Left lung (tissue), 14 donors: ENCODE measurements at regions of chr1 and their contacts with region 1.

Region 1: GRCh38 chr1:54406339-54407153 is at the start of gene SSBP3:
- DNase-seq: peak; percentile 89 to 99 (median 94)
- ATAC-seq: peak; percentile 90
- H3K4me3 ChIP-seq: peak within 1 kb of the TSS; percentile 73 to 84
- H3K27ac ChIP-seq: peak within 1 kb of the TSS; percentile 82 to 85
- H3K4me1 ChIP-seq: peaks cover 18 to 60% of the 10 kb centered on the region in 2 donors
- H3K27me3 ChIP-seq: peaks cover 0 to 8% of the 10 kb centered on the region in 2 donors
- CTCF ChIP-seq: no peak
- polyA plus RNA-seq, gene SSBP3: 99.5 to 129 (median 119) TPM

Region 2: DNA sequence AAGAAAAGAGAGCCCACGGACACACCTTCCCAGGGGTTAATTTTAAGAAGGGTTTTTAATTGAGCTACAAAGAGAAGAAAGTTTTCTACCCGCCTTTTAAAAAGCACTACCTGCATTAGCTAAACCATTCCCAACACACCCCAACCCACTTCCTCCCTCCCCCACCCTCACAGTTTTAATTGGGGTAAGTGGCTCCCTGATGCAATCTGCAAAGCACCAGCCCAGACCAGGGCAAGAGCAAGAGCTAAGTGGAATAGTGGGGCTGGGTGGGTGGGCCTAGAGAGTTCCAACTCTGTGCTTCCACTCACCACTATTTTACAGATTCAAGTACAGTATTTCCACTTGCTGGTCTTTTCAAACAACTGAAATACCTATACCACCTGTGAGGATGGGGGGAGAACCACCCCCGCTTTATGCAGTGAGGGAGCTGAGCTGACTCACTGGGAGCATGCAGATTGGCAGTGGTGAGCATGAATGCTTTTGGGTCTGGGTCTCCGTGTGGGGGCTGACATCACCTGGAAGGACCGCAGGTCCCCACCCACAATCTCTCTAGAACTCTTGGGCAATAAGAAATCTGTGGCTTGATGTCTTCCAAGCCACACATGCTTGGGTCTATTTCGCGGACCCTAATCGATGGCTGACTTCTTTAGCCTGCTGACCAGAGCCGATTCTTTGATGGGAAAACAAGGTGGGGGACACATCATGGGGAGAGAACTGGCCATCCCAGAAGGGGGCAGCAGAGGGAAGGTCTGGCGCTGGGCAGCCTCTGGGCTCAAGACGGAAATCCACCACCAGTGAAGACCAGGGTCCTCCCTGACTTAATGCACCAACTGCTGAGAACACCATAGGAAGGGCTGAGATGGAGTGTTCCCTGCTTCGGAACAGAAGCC is 95.9 kb before region 1 on chr1:
- intact Hi-C with region 1: loop called in 1 of 2 experiments (anchors 10 kb)
- DNase-seq: no peak
- ATAC-seq: peak; percentile 51
- H3K4me3 ChIP-seq: no peak overlapping the region
- H3K27ac ChIP-seq: no peak overlapping the region
- H3K4me1 ChIP-seq: peaks cover 6 to 38% of the 10 kb centered on the region in 2 donors
- H3K27me3 ChIP-seq: no peaks in the 10 kb centered on the region
- CTCF ChIP-seq: peak; percentile 42 to 50

Region 3: DNA sequence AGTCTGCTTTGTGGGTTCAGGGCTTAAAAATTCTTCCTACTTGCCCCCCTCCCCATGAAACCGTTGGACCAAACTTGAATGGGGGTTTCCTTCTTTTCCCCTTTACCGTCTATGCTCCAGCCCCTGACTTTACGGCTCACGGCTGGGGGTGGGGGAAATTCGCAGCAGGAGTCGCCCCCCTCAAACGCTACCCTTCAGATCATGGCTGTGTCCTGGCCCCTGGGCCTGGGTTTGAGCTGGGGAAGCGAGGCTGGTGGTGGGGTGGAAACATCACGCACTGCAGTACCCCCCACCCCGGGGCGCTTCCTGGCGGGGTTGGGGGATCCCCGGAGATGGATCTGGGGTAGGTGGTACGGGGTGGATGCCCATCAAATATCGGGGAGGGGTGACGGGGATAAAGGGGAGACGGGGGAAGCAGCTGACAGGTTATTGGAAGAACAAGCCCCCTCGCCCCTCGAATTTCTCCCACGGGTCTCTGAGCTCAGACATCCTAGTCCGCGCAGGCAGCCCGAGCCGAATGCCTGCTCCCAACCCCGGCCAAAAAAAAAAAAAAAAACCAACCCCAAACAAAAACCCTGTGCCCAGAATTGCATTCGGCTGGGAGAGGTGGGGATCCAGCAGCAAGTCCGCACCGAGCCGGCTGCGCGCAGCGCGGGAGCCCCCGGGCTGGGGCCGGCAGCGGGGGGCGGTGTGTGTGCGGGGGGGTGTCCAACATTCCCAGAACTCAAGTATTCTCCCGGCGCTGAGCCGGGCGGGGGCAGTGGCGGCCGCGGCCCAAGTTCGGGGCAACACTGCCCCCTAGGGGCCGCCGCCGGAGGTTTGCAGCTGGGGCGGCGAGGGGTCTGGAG is 82.5 kb after region 1 on chr1:
- intact Hi-C with region 1: loop called in 1 of 2 experiments (anchors 5 kb)
- DNase-seq: peak; percentile 78 to 95 (median 92)
- ATAC-seq: peak; percentile 86
- H3K4me3 ChIP-seq: peak overlapping the region; percentile 56 to 59
- H3K27ac ChIP-seq: peak overlapping the region; percentile 91
- H3K4me1 ChIP-seq: peaks cover 22 to 40% of the 10 kb centered on the region in 2 donors
- H3K27me3 ChIP-seq: peaks cover 0 to 30% of the 10 kb centered on the region in 2 donors
- CTCF ChIP-seq: peak; percentile 96 to 98

Region 4: GRCh38 chr1:54506594-54506993 is 100.0 kb after region 1 on chr1:
- intact Hi-C with region 1: no loop called
- DNase-seq: no peak
- ATAC-seq: peak; percentile 42
- H3K4me3 ChIP-seq: no peak overlapping the region
- H3K27ac ChIP-seq: no peak overlapping the region
- H3K4me1 ChIP-seq: no peaks in the 10 kb centered on the region
- H3K27me3 ChIP-seq: peaks cover 0 to 20% of the 10 kb centered on the region in 2 donors
- CTCF ChIP-seq: no peak